Activated CD8-positive, alpha-beta T cell treated with anti-CD3 and anti-CD28 coated beads for 36 hours (primary cell): ENCODE measurements at regions of chr12 and their contacts with region 1.

Region 1: DNA sequence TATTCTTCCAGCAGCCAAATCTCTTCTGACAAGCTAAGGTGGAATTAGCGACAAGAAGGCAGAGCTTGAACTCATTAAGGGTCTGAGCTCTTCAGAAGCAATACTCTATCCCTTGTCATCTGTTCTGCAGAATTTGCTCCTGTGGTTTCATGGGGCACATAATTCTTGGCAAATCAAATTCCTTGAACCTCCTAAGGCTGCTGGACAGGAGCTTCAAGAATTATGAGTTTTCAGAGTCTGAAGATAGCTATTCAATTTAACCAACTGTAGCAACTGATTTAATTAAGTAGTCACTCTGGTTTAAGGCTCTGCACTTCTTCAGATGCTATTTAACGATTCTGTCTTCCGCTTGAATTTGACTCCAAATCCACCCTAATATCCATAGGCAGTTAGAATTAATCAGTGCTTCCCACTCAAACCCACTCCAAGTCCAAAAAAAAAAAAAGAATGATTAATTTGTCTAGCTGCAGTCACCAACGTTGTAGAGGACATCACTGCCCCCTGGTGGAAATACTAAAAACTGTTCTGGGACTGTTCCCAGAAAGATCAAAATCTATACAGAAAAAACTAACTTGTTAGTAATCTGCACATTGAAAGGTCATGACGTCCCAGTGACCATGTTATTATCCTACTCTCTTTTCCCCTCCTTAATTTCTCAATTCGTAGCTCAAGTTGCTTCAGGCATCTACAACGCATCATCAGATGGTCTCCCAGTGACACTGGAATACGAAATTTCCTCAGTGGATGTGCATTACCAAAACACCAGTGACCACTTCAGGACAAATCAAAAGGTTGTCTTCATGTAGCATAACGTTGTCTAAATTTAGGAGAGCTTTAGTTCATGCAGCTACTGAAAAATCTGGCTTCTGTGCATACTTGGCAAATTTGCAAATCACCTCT is 169.8 kb downstream of the KIF21A start:
- DNase-seq: peak; percentile 33
- ATAC-seq: no peak
- H3K4me3 Mint-ChIP-seq: no peak overlapping the region
- H3K27ac Mint-ChIP-seq: no peak overlapping the region
- H3K4me1 Mint-ChIP-seq: peaks cover 5% of the 10 kb centered on the region
- H3K27me3 Mint-ChIP-seq: peaks cover 18% of the 10 kb centered on the region
- CTCF ChIP-seq: peak; percentile 73

Region 2: DNA sequence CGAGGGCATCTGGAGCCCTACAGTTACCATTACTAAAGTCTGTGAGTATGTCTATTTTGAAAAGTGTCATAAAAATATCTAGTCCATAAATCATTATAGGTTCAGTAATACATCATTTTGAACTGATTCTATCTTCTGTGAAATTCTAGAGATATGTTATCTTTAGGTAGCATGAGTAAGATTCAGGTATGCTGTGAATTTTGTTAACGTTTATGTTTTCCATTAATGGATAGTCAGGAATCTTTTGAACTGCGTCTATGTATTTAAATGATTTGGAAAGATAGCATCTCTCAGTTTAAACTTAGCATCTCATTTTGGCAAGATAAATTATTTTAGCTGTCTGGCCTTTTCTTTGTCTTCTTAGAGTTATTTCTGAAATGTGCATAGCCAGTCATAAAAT is 948.2 kb before region 1 on chr12:
- CTCF ChIA-PET with region 1: interaction called, 3 read pairs
- POLR2A ChIA-PET with region 1: no interaction called
- intact Hi-C with region 1: loop called (anchors 5 kb)
- DNase-seq: no peak
- ATAC-seq: no peak
- H3K4me3 Mint-ChIP-seq: no peak overlapping the region
- H3K27ac Mint-ChIP-seq: no peak overlapping the region
- H3K4me1 Mint-ChIP-seq: peaks cover 4% of the 10 kb centered on the region
- H3K27me3 Mint-ChIP-seq: no peaks in the 10 kb centered on the region
- CTCF ChIP-seq: no peak

Region 3: DNA sequence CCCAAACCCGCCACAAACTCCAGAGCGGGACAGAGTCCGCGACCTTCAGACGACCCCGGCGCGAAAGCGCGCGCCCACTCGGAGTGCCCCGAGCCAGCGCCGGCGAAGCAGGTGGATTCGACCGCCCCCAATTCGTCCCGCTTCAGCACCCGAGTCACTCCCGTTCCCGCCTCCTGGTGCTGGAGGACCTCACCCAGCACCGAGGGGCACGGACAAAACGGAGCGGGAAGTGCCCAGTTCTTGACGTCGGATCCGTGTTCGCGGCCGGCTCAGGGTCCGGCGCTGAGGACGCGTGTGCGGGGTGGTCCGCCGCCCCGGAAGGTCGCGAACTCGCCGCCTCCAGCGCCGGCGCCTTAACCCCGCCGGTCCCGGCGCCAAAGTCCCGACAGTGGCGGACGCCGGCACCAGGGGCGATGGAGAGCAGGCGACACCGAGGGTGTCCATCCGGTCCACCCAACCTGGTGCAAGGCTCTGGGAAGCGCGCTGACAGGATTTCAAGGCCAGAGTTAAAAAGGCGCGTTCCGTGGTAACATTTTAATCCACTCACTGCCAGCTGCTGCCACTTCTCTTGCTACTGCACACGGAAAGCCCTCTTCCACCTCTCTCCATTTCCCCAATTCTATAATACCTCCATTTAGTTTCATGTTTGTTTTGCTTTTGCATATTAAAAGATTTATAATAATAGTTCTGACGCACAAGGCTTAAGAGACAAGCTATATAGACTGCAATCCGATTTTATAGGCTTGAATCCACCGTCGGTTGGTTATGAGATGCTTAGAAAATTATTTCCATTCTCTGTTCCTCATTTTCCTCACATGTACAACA is 127.7 kb before region 1 on chr12:
- CTCF ChIA-PET with region 1: interaction called, 8 read pairs
- POLR2A ChIA-PET with region 1: no interaction called
- intact Hi-C with region 1: loop called (anchors 10 kb)
- DNase-seq: peak; percentile 43
- ATAC-seq: peak; percentile 79
- H3K4me3 Mint-ChIP-seq: peak overlapping the region; percentile 11
- H3K27ac Mint-ChIP-seq: no peak overlapping the region
- H3K4me1 Mint-ChIP-seq: no peaks in the 10 kb centered on the region
- H3K27me3 Mint-ChIP-seq: peaks cover 13% of the 10 kb centered on the region
- CTCF ChIP-seq: peak; percentile 61

Region 4: GRCh38 chr12:39287409-39287808 is 14.3 kb after region 1 on chr12:
- CTCF ChIA-PET with region 1: interaction called, 19 read pairs
- POLR2A ChIA-PET with region 1: no interaction called
- intact Hi-C with region 1: no loop called
- DNase-seq: no peak
- ATAC-seq: no peak
- H3K4me3 Mint-ChIP-seq: no peak overlapping the region
- H3K27ac Mint-ChIP-seq: no peak overlapping the region
- H3K4me1 Mint-ChIP-seq: no peaks in the 10 kb centered on the region
- H3K27me3 Mint-ChIP-seq: no peaks in the 10 kb centered on the region
- CTCF ChIP-seq: no peak

Region 5: DNA sequence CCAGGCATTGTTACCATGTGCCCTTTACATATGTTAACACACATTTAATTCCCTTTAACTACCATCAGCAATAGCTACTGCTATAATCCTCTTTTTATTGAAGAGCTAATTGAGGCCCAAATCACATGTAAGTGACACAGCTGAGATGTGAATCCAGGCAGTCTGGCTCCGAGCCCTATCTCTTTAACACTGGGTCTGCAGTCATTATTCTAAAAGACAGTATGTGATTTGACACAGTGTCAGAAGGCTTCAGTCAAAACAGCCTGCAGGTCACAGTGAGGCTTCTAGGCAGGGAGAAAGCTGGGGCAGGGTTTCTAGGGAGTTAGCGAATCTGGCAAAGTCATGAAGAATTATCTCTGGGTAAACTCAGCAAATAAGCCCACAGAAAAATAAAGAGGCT is 21.6 kb after region 1 on chr12:
- CTCF ChIA-PET with region 1: interaction called, 19 read pairs
- POLR2A ChIA-PET with region 1: no interaction called
- intact Hi-C with region 1: no loop called
- DNase-seq: no peak
- ATAC-seq: no peak
- H3K4me3 Mint-ChIP-seq: no peak overlapping the region
- H3K27ac Mint-ChIP-seq: no peak overlapping the region
- H3K4me1 Mint-ChIP-seq: no peaks in the 10 kb centered on the region
- H3K27me3 Mint-ChIP-seq: no peaks in the 10 kb centered on the region
- CTCF ChIP-seq: no peak

Region 6: DNA sequence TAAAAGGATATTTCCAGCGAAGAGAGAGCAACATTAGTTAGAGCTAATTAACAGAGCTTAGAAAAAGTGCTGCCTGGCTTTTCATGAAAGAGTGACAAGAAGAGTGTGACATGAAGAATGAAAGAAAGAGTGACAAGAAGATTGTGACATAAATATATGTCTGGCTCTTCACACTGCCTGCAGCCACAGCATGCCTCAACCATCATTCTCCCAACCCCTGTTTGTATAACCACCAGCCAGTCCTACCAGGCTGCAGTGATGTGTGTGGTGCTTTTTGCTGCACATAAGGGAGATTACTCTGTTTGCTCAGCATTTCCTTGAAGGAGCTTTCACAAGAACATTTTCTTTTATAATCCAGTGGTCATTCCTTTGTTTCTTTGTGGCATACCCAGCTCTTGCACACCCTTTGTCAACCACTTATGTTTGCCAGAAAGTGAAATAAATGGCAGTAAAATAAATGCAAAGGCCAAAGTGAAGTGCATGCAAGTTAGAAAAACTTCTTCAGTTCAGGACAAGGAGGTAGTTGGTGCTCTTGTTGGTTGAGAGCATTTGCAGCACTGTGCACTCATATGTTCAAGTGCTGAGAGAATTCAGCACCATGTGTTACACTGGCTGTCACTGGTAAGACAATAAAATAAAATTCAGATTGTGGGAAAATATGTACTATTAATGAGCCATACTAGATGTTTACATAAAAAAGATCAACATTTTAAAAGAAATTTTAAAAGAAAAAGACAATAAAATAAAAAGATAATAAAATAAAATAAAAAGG is 119.2 kb after region 1 on chr12:
- CTCF ChIA-PET with region 1: no interaction called
- POLR2A ChIA-PET with region 1: no interaction called
- intact Hi-C with region 1: no loop called
- DNase-seq: no peak
- ATAC-seq: no peak
- H3K4me3 Mint-ChIP-seq: no peak overlapping the region
- H3K27ac Mint-ChIP-seq: no peak overlapping the region
- H3K4me1 Mint-ChIP-seq: no peaks in the 10 kb centered on the region
- H3K27me3 Mint-ChIP-seq: no peaks in the 10 kb centered on the region
- CTCF ChIP-seq: no peak